ENCODE measurements at regions of chr4 and their contacts with region 1.

Region 1: DNA sequence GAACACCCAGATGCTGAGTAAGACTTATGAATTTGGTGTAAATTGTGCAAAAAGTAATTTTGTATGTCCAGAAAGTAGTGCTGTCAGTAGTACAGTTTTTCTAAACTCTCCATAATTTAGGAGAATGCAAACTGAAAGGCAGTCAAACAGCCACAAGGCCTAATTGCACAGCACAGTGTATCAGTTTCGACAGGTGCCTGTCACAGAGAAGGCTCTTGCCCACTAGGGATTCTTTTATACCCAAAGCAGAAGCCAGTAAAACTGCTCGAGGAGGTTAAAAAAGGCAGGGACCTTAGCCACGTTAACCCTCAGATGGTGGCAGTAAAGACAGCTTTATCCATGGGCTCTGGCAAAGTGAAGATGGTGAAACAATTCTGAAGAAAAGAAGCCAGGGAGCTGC is 69.4 kb upstream of the GATB start:
- DNase-seq: no peak
- H3K4me3 ChIP-seq: no peak overlapping the region
- H3K27ac ChIP-seq: no peak overlapping the region
- H3K4me1 ChIP-seq: no peaks in the 10 kb centered on the region
- H3K27me3 ChIP-seq: no peaks in the 10 kb centered on the region
- CTCF ChIP-seq: no peak
- POLR2A ChIP-seq: no peak

Region 2: GRCh38 chr4:151690164-151690870 is 139.9 kb before region 1 on chr4:
- intact Hi-C with region 1: no loop called
- DNase-seq: no peak
- H3K4me3 ChIP-seq: no peak overlapping the region
- H3K27ac ChIP-seq: peak overlapping the region in 1 of 8 donors; percentile 44
- H3K4me1 ChIP-seq: peaks cover 0 to 30% (median 16%) of the 10 kb centered on the region in 6 donors
- H3K27me3 ChIP-seq: no peaks in the 10 kb centered on the region
- CTCF ChIP-seq: no peak
- POLR2A ChIP-seq: no peak

Region 3: DNA sequence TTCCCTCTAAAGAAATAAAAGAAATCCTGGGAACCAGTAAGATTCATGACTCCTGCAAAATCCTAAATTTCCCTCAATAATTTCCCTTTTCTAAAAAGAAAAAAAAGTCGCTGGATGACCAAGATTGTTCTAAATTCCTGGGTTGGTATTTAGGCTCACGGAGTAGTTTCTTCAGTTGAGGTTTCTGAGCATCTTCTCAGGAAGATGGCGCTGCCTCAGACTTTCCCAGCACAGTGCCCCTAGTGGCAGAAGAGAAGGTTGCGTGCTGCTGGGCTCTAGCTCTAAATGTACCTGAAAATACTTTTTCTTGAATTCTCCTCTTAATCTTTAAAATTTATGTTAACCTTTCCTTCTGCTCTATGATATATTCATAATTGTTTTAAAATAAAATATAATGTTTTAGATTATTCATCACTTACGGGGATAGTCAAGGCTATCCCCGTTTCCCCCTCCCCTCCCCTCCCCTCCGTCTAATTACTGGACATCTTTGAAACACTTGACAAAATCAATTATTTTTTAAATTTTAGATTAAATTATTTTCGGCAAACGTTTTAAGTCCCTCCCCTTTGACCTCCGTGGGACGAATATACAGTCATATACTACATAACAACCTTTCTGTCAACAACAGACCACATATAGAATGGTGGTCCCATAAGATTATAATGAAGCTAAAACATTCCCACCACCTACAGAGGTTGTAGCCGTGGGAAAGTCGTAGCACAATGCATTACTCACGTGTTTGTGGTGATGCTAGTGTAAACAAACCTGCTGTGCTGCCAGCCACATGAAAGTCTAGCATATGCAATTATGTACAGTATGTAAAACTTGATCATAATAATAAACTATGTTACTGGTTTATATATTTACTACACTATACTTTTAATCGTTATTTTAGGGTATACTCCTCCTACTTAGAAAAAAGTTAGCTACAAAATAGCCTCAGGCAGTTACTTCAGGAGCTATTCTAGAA is 28.3 kb before region 1 on chr4:
- intact Hi-C with region 1: loop called (anchors 2 kb)
- DNase-seq: no peak
- H3K4me3 ChIP-seq: no peak overlapping the region
- H3K27ac ChIP-seq: no peak overlapping the region
- H3K4me1 ChIP-seq: peaks cover 0 to 2% (median 0%) of the 10 kb centered on the region in 6 donors
- H3K27me3 ChIP-seq: no peaks in the 10 kb centered on the region
- CTCF ChIP-seq: peak; percentile 43 to 88 (median 83)
- POLR2A ChIP-seq: no peak